ENCODE measurements at regions of chr1 and their contacts with region 1.

Region 1: DNA sequence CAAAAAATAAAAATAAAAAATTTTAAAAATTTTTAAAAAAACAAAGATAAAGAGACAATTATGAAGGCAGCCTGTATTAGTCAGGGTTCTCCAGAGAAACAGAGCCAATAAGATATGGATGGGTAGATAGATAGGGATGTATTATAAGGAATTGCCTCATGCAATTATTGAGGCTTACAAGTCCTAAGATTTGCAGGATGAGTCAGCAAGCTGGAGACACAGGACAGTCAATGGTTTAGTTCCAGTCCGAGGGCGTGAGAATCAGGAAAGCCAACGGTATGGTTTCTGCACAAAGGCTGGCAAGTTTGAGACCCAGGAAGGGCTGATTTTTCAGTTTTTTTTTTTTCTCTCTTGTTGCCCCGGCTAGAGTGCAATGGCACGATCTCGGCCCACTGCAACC is 24.1 kb upstream of the EIF4G3 start:
- DNase-seq: no peak
- H3K4me3 ChIP-seq: no peak overlapping the region
- H3K27ac ChIP-seq: no peak overlapping the region
- H3K4me1 ChIP-seq: no peaks in the 10 kb centered on the region
- H3K27me3 ChIP-seq: no peaks in the 10 kb centered on the region
- CTCF ChIP-seq: no peak

Region 2: GRCh38 chr1:20521960-20522861 is 678.6 kb before region 1 on chr1:
- CTCF ChIA-PET with region 1: no interaction called
- dilution Hi-C with region 1: no loop called
- in situ Hi-C with region 1: loop called in 1 of 2 experiments (anchors 25 kb)
- intact Hi-C with region 1: loop called (anchors 2 kb)
- DNase-seq: peak; percentile 61
- H3K4me3 ChIP-seq: no peak overlapping the region
- H3K27ac ChIP-seq: no peak overlapping the region
- H3K4me1 ChIP-seq: no peaks in the 10 kb centered on the region
- H3K27me3 ChIP-seq: no peaks in the 10 kb centered on the region
- CTCF ChIP-seq: peak; percentile 94 to 98

Region 3: GRCh38 chr1:20981915-20982314 is 218.9 kb before region 1 on chr1:
- CTCF ChIA-PET with region 1: no interaction called
- dilution Hi-C with region 1: no loop called
- in situ Hi-C with region 1: no loop called
- intact Hi-C with region 1: loop called (anchors 1 kb)
- DNase-seq: peak; percentile 16
- H3K4me3 ChIP-seq: no peak overlapping the region
- H3K27ac ChIP-seq: no peak overlapping the region
- H3K4me1 ChIP-seq: peaks cover 11% of the 10 kb centered on the region
- H3K27me3 ChIP-seq: no peaks in the 10 kb centered on the region
- CTCF ChIP-seq: peak in 1 of 2 donors; percentile 44

Region 4: DNA sequence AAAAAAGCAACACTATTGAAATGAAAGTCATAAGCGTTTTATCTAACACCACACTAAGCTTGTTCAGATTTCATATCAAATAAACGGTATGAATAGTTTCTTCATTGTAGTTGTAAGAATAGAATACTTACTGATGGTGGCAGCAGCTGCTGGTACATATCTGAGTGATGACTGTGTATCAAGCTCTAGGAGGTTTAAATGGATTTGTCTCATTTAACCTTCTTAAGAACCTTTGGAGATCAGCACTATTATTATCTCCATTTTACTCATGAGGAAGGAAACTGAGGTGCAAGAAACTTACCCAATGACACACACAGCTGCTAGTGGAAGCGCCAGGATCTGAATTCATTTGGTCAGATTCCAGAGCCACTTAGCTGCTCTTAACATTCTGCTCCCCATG is 128.0 kb before region 1 on chr1:
- CTCF ChIA-PET with region 1: no interaction called
- dilution Hi-C with region 1: no loop called
- in situ Hi-C with region 1: no loop called
- intact Hi-C with region 1: loop called (anchors 5 kb)
- DNase-seq: no peak
- H3K4me3 ChIP-seq: no peak overlapping the region
- H3K27ac ChIP-seq: no peak overlapping the region
- H3K4me1 ChIP-seq: no peaks in the 10 kb centered on the region
- H3K27me3 ChIP-seq: no peaks in the 10 kb centered on the region
- CTCF ChIP-seq: no peak

Measured in mammary epithelial cell (primary cell).